Heart left ventricle (tissue), 16 donors: ENCODE measurements at regions of chr3 and their contacts with region 1.

Region 1: DNA sequence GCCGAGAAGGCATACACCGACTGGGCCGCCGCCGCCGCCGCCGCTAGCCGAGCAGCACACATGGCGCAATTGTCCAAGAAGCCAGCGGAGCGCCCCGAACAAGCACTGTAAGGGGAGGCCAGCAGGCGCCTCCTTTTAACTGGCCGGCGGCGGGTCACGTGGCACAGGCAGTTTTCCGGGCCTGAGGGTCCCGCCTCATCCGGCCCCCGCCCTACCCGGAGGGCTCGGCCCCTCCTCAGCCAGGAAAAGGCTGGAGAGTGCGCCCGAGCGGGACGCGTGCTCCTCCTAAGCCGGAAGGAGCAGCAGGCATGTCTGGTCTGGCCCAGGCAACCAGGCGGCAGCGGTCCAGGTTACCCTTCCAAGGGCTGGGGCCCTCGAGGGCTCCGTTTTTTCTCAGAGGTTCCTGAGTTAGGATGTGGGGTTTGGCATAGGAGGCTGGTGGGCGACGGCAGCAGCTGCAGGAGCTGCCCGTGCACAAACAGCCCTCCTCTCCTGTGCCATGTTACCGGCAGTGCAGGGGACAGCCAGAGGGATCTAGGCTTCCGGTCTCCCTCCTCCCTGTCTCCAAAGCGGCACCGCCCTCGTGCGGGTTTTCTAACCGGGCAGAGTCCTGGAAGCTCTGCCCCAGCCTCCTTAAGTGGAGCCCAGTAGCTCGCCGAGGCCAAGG is at the start of gene GPX1:
- DNase-seq: peak; percentile 96 to 98 (median 97)
- ATAC-seq: peak; percentile 94 to 98 (median 96)
- H3K4me3 ChIP-seq: peak within 1 kb of the TSS; percentile 60 to 92 (median 84)
- H3K27ac ChIP-seq: peak within 1 kb of the TSS; percentile 84 to 96 (median 91)
- H3K4me1 ChIP-seq: peaks cover 3 to 47% (median 26%) of the 10 kb centered on the region in 12 donors
- H3K27me3 ChIP-seq: no peaks in the 10 kb centered on the region
- CTCF ChIP-seq: no peak
- POLR2A ChIP-seq: peak; percentile 60 to 98
- total RNA-seq, gene GPX1: 86.3 to 341 (median 124) TPM

Region 2: DNA sequence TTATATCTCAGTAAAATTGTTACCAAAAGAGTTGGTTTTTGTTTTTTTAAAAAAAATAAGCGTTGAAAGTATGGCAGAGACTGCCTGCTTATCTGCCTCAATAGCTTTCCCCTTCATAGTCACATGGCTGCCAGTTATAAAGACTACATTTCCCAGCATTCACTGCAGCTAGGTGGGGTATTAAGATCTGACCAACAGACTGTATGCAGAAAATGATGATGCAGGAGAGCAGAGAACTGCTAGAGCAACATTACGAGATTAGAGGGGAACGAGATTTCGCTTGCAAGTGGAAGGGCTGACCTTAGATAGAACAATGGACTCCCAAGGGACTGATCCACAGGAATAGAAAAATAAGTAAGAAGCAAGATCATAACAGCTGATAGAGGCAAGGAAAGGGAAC is 39.1 kb after region 1 on chr3:
- intact Hi-C with region 1: loop called in 2 of 10 experiments (anchors 5 kb)
- DNase-seq: peak in 2 of 5 donors; percentile 23 to 51
- ATAC-seq: peak; percentile 66 to 94 (median 78)
- H3K4me3 ChIP-seq: peak overlapping the region in 3 of 12 donors; percentile 9 to 15 (median 10)
- H3K27ac ChIP-seq: peak overlapping the region in 9 of 12 donors; percentile 22 to 78 (median 64)
- H3K4me1 ChIP-seq: peaks cover 0 to 82% (median 59%) of the 10 kb centered on the region in 12 donors
- H3K27me3 ChIP-seq: no peaks in the 10 kb centered on the region
- CTCF ChIP-seq: no peak
- POLR2A ChIP-seq: no peak

Region 3: GRCh38 chr3:49406571-49407566 is 48.5 kb after region 1 on chr3:
- intact Hi-C with region 1: loop called in 9 of 10 experiments (anchors 1 to 5 kb)
- DNase-seq: peak in 1 of 5 donors; percentile 18
- ATAC-seq: no peak
- H3K4me3 ChIP-seq: no peak overlapping the region
- H3K27ac ChIP-seq: peak overlapping the region in 8 of 12 donors; percentile 13 to 49 (median 27)
- H3K4me1 ChIP-seq: peaks cover 4 to 71% (median 52%) of the 10 kb centered on the region in 12 donors
- H3K27me3 ChIP-seq: no peaks in the 10 kb centered on the region
- CTCF ChIP-seq: no peak
- POLR2A ChIP-seq: no peak

Region 4: DNA sequence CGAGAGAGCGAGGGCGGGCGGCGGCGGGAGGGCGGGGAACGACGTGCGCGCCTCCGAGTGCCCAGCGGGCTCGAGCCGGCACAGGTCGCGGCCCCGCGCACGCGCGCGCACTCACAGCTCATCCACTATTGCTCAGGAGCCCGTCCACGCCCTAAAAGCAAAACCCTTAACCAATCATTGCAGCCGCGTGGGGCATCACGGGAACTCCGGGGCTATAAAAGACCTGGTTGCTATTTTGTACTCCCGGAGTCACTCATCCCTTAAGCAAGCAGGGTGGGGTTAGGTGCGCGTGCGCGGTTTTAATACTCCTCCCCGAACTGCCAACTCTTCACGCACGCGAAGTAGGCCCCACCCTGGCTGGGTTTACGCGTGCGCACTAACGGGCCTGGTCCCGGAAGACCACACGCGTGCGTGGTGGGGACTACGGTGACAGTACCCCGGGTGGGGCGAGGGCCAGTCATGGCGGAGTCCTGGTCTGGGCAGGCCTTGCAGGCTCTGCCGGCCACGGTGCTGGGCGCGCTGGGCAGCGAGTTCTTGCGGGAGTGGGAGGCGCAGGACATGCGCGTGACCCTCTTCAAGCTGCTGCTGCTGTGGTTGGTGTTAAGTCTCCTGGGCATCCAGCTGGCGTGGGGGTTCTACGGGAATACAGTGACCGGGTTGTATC is 53.8 kb after region 1 on chr3 and contains the starts of genes RHOA and TCTA:
- intact Hi-C with region 1: loop called in 8 of 10 experiments (anchors 1 to 5 kb)
- DNase-seq: peak; percentile 99 to 100 (median 100)
- ATAC-seq: peak; percentile 95 to 97 (median 96)
- H3K4me3 ChIP-seq: peak within 1 kb of the TSS; percentile 67 to 99 (median 86)
- H3K27ac ChIP-seq: peak within 1 kb of the TSS; percentile 91 to 99 (median 98)
- H3K4me1 ChIP-seq: peaks cover 7 to 79% (median 50%) of the 10 kb centered on the region in 12 donors
- H3K27me3 ChIP-seq: no peaks in the 10 kb centered on the region
- CTCF ChIP-seq: no peak
- POLR2A ChIP-seq: peak; percentile 90 to 96
- total RNA-seq, gene RHOA: 224 to 479 (median 291) TPM
- total RNA-seq, gene TCTA: 13.2 to 25.3 (median 16.7) TPM

Region 5: GRCh38 chr3:49422379-49423248 is 64.3 kb after region 1 on chr3 and contains the start of gene AMT:
- intact Hi-C with region 1: loop called in 1 of 10 experiments (anchors 10 kb)
- DNase-seq: peak; percentile 57 to 84 (median 72)
- ATAC-seq: peak; percentile 81 to 92 (median 84)
- H3K4me3 ChIP-seq: peak within 1 kb of the TSS; percentile 16 to 66 (median 52)
- H3K27ac ChIP-seq: peak within 1 kb of the TSS in 10 of 12 donors; percentile 38 to 76 (median 63)
- H3K4me1 ChIP-seq: peaks cover 0 to 35% (median 6%) of the 10 kb centered on the region in 12 donors
- H3K27me3 ChIP-seq: no peaks in the 10 kb centered on the region
- CTCF ChIP-seq: no peak
- POLR2A ChIP-seq: no peak
- total RNA-seq, gene AMT: 10.3 to 39.9 (median 21.5) TPM

Region 6: DNA sequence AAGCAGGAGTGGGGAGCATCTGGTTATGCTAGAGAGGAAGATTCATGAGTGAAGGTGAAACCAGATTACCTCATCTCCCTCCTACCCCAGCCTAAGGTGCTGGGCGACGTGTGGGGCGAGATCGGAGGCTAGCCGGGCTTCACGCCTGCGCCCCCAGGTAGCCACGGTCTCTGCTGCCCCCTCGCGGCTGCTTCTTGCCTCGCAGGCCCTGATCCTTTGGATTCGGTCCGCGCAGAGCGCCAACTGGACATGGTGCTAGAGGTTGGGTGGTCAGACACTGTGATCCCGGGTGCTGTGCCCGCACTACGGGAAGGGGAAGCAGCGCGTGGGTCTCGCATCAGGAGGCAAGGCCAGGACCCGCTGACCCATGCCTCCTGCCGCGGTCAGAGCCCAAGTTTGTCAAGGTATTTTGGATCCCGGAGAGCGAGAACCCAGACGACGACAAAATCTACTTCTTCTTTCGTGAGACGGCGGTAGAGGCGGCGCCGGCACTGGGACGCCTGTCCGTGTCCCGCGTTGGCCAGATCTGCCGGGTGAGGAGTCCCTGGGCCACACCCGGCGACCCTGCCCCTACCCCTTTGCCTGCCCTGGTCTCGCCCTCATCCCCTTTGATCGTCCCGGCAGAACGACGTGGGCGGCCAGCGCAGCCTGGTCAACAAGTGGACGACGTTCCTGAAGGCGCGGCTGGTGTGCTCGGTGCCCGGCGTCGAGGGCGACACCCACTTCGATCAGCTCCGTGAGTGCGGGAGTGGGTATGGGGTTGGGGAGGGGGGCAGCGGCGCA is 914.8 kb after region 1 on chr3:
- intact Hi-C with region 1: no loop called
- DNase-seq: peak; percentile 83 to 94 (median 86)
- ATAC-seq: peak; percentile 39 to 77 (median 61)
- H3K4me3 ChIP-seq: peak overlapping the region in 11 of 12 donors; percentile 19 to 54 (median 39)
- H3K27ac ChIP-seq: peak overlapping the region in 6 of 12 donors; percentile 9 to 51 (median 30)
- H3K4me1 ChIP-seq: peaks cover 0 to 47% (median 26%) of the 10 kb centered on the region in 12 donors
- H3K27me3 ChIP-seq: peaks cover 0 to 38% (median 6%) of the 10 kb centered on the region in 9 donors
- CTCF ChIP-seq: peak; percentile 96 to 99 (median 98)
- POLR2A ChIP-seq: no peak